T-cell (primary cell): ENCODE measurements at regions of chr12 and their contacts with region 1.

Region 1: GRCh38 chr12:118135788-118136558 is at the start of gene PEBP1:
- DNase-seq: peak; percentile 83 to 94 (median 90)
- ATAC-seq: peak; percentile 99 to 100 (median 100)
- H3K4me3 ChIP-seq: peak within 1 kb of the TSS; percentile 89
- H3K4me3 Mint-ChIP-seq: peak within 1 kb of the TSS; percentile 93 to 98 (median 96)
- H3K27ac ChIP-seq: peak within 1 kb of the TSS; percentile 62
- H3K27ac Mint-ChIP-seq: peak within 1 kb of the TSS; percentile 86 to 95
- H3K4me1 ChIP-seq: peaks cover 4 to 33% of the 10 kb centered on the region in 2 experiments
- H3K4me1 Mint-ChIP-seq: peaks cover 19 to 38% (median 32%) of the 10 kb centered on the region in 3 donors
- H3K27me3 ChIP-seq: no peaks in the 10 kb centered on the region
- H3K27me3 Mint-ChIP-seq: no peaks in the 10 kb centered on the region
- total RNA-seq, gene PEBP1: 86.4 to 107 (median 97.3) TPM

Region 2: GRCh38 chr12:117933545-117933944 is 202.4 kb before region 1 on chr12:
- CTCF ChIA-PET with region 1: no interaction called
- POLR2A ChIA-PET with region 1: no interaction called
- DNase-seq: no peak
- ATAC-seq: no peak
- H3K4me3 ChIP-seq: no peak overlapping the region
- H3K4me3 Mint-ChIP-seq: no peak overlapping the region
- H3K27ac ChIP-seq: no peak overlapping the region
- H3K27ac Mint-ChIP-seq: no peak overlapping the region
- H3K4me1 ChIP-seq: no peaks in the 10 kb centered on the region
- H3K4me1 Mint-ChIP-seq: no peaks in the 10 kb centered on the region
- H3K27me3 ChIP-seq: peaks cover 0 to 6% of the 10 kb centered on the region in 2 experiments
- H3K27me3 Mint-ChIP-seq: peaks cover 6 to 14% of the 10 kb centered on the region in 2 donors

Region 3: DNA sequence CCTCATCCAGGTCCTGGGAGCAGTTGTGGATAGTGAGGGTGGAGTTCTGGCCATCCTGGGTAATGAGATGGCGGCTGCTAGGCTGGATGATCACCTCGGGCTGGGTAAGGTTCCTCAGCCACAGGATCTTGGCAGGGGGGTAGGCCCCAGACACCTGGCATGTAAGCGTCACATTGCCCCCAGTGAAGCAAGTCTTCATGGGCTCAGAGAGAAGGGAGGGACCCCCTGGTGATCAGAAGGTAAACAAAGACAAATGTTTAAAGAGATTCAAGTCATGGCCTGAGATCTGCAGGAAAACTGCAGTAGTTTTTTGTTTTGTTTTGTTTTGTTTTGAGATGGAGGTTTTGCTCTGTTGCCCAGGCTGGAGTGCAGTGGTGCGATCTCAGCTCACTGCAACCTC is 62.2 kb before region 1 on chr12:
- CTCF ChIA-PET with region 1: no interaction called
- POLR2A ChIA-PET with region 1: no interaction called
- DNase-seq: no peak
- ATAC-seq: no peak
- H3K4me3 ChIP-seq: no peak overlapping the region
- H3K4me3 Mint-ChIP-seq: no peak overlapping the region
- H3K27ac ChIP-seq: no peak overlapping the region
- H3K27ac Mint-ChIP-seq: no peak overlapping the region
- H3K4me1 ChIP-seq: no peaks in the 10 kb centered on the region
- H3K4me1 Mint-ChIP-seq: no peaks in the 10 kb centered on the region
- H3K27me3 ChIP-seq: no peaks in the 10 kb centered on the region
- H3K27me3 Mint-ChIP-seq: peaks cover 0 to 2% of the 10 kb centered on the region in 2 donors

Region 4: GRCh38 chr12:118103604-118104382 is 32.2 kb before region 1 on chr12 and contains the start of gene VSIG10:
- CTCF ChIA-PET with region 1: no interaction called
- POLR2A ChIA-PET with region 1: no interaction called
- DNase-seq: peak in 20 of 35 experiments; percentile 1 to 24 (median 10)
- ATAC-seq: peak; percentile 56 to 71 (median 70)
- H3K4me3 ChIP-seq: peak within 1 kb of the TSS; percentile 45 to 80
- H3K4me3 Mint-ChIP-seq: peak within 1 kb of the TSS; percentile 82 to 84 (median 83)
- H3K27ac ChIP-seq: no peak within 1 kb of the TSS
- H3K27ac Mint-ChIP-seq: peak within 1 kb of the TSS in 1 of 2 donors; percentile 6
- H3K4me1 ChIP-seq: peaks cover 0 to 15% of the 10 kb centered on the region in 2 experiments
- H3K4me1 Mint-ChIP-seq: peaks cover 8 to 13% (median 8%) of the 10 kb centered on the region in 3 donors
- H3K27me3 ChIP-seq: peaks cover 0 to 33% of the 10 kb centered on the region in 2 experiments
- H3K27me3 Mint-ChIP-seq: peaks cover 7 to 21% of the 10 kb centered on the region in 2 donors
- total RNA-seq, gene VSIG10: 1.6 to 4.1 (median 3.2) TPM

Region 5: DNA sequence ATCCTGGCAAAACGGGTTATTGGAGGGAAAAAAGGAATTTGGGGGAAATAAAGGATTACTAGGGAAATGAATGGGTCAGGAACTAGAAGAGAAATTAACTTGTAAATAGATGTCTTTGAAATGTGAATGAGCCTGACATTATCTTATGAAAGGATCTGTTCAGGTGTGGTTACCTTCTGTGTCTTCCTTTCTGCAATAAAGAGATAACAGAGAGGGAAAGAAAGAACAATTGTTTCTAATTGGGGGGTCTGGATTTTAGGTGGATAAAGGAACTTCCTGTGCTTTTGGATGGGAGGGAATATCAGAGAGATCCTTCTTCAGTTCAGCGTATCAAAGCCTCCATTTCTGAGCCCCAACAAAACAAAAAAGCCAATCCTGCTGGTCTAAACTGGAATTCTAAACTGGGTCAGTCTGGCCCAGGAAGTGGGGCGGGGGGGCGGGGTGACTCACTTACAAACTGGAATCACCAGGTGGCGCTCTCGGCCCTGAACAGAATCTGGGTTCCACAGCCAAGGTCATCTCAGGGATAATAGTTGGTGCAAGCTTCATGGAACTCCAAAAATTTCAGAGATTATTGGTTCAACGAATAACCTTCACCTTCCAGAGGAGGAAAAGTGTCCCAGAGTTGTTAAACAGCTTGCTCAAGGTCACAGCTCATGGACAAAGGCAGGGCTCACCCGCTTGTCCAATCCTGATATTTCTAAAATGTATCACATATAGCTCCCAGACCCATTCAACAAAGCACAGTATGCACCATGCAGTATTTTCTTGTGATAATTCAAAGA is 15.2 kb before region 1 on chr12:
- CTCF ChIA-PET with region 1: interaction called, 6 to 13 read pairs
- POLR2A ChIA-PET with region 1: interaction called in 1 of 2 experiments, 3 read pairs
- DNase-seq: peak in 32 of 35 experiments; percentile 16 to 76 (median 48)
- ATAC-seq: peak; percentile 56 to 83 (median 72)
- H3K4me3 ChIP-seq: no peak overlapping the region
- H3K4me3 Mint-ChIP-seq: no peak overlapping the region
- H3K27ac ChIP-seq: peak overlapping the region; percentile 78
- H3K27ac Mint-ChIP-seq: peak overlapping the region; percentile 80 to 86
- H3K4me1 ChIP-seq: peaks cover 0 to 2% of the 10 kb centered on the region in 2 experiments
- H3K4me1 Mint-ChIP-seq: peaks cover 7 to 12% (median 8%) of the 10 kb centered on the region in 3 donors
- H3K27me3 ChIP-seq: no peaks in the 10 kb centered on the region
- H3K27me3 Mint-ChIP-seq: no peaks in the 10 kb centered on the region

Region 6: DNA sequence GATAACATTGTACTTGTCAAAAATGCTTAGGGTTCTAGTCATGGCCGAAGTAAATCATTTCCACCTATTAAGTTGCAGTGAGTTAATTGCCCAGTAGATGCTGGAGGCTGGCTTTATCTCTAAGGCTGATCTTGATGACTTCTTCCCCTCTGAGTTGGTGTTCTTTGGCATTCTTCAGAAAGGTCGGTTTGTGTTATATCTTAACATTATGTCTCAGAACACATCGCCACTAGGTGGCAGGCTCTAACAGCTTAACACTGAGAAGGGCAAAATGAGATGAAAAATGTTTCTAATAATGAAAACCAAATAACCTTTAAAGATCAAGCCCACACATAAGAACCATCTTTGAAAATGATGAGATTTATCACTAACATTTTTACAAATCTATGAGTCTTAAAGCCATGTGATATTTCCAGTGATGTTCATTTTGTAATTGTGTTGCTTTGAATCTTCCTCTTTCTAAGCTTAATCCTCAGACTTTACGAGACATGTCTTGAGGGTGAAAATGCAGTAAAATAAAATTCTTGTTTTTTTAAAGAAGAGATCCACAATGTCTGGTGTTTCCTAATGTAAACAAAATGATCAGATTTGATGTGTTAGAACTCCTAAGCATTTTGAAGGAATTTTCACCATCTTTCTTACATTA is 269.0 kb after region 1 on chr12:
- CTCF ChIA-PET with region 1: interaction called in 1 of 2 experiments, 11 read pairs
- POLR2A ChIA-PET with region 1: no interaction called
- DNase-seq: peak in 33 of 35 experiments; percentile 9 to 63 (median 39)
- ATAC-seq: peak in 2 of 4 experiments; percentile 30 to 46
- H3K4me3 ChIP-seq: no peak overlapping the region
- H3K4me3 Mint-ChIP-seq: no peak overlapping the region
- H3K27ac ChIP-seq: no peak overlapping the region
- H3K27ac Mint-ChIP-seq: no peak overlapping the region
- H3K4me1 ChIP-seq: no peaks in the 10 kb centered on the region
- H3K4me1 Mint-ChIP-seq: no peaks in the 10 kb centered on the region
- H3K27me3 ChIP-seq: no peaks in the 10 kb centered on the region
- H3K27me3 Mint-ChIP-seq: no peaks in the 10 kb centered on the region

Region 7: DNA sequence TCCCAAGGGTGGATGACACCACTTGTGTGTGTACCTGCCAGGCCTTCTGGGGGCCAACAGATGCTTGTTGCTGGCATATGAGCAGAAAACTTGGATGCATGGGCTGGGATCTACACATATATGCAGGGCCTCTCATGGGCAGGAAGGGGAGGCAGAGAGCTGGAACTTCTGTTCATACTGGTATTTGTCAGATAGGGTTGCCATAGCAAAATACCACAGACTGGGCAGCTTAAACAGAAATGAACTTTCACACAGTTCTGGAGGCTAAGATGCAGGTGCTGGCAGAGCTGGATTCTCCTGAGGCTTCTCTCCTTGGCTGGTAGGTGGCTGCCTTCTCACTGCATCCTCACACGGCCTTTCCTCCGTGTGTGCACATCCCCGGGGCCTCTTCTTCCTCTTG is 362.2 kb after region 1 on chr12:
- CTCF ChIA-PET with region 1: no interaction called
- POLR2A ChIA-PET with region 1: no interaction called
- DNase-seq: no peak
- ATAC-seq: no peak
- H3K4me3 ChIP-seq: no peak overlapping the region
- H3K4me3 Mint-ChIP-seq: no peak overlapping the region
- H3K27ac ChIP-seq: no peak overlapping the region
- H3K27ac Mint-ChIP-seq: no peak overlapping the region
- H3K4me1 ChIP-seq: no peaks in the 10 kb centered on the region
- H3K4me1 Mint-ChIP-seq: no peaks in the 10 kb centered on the region
- H3K27me3 ChIP-seq: peaks cover 0 to 3% of the 10 kb centered on the region in 2 experiments
- H3K27me3 Mint-ChIP-seq: peaks cover 3 to 4% of the 10 kb centered on the region in 2 donors